GM12878 (cell line): ENCODE measurements at regions of chr6 and their contacts with region 1.

Region 1: DNA sequence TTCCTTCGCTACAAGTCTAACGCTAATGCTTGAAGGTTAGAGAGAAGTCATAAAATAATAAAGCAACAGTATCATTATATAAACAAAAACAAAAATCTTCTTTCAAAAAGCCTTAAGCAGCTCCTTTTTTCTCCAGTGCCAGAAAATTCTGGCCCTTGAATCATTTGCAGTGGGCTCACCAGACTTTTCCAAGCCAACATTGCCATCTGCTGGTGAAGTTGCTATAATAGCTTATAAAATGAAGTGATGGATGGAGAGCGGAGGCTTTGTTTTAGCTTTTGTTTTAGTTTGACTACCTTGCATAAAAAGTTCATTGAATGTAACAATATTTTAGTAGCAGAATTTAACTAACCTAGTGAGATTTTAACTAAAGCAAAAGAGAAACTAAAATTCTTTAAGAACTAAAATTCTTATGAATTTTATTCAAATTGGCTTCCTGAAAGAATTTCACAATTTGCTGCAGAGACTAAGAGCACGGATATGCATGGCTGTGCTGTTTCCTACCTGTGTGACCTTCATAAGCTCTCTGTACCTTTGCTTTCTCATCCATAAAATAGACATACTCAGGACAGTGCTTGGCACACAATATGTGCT is 44.8 kb upstream of the SLC2A12 start:
- DNase-seq: peak; percentile 3
- ATAC-seq: peak; percentile 66
- H3K4me3 ChIP-seq: no peak overlapping the region
- H3K27ac ChIP-seq: no peak overlapping the region
- H3K4me1 ChIP-seq: no peaks in the 10 kb centered on the region
- H3K27me3 ChIP-seq: no peaks in the 10 kb centered on the region
- CTCF ChIP-seq: peak; percentile 43 to 64 (median 54); a peak in 4 of 6 replicates
- EP300 ChIP-seq: no peak
- POLR2A ChIP-seq: no peak
- RAD21 ChIP-seq: peak; percentile 91

Region 2: GRCh38 chr6:133184798-133185372 is 912.3 kb before region 1 on chr6:
- CTCF ChIA-PET with region 1: no interaction called
- POLR2A ChIA-PET with region 1: no interaction called
- RAD21 ChIA-PET with region 1: no interaction called
- SMC1A ChIA-PET with region 1: no interaction called
- in situ Hi-C with region 1: loop called (anchors 25 kb)
- intact Hi-C with region 1: no loop called
- DNase-seq: no peak
- ATAC-seq: no peak
- H3K4me3 ChIP-seq: no peak overlapping the region
- H3K27ac ChIP-seq: no peak overlapping the region
- H3K4me1 ChIP-seq: no peaks in the 10 kb centered on the region
- H3K27me3 ChIP-seq: no peaks in the 10 kb centered on the region; a peak in 1 of 4 replicates
- CTCF ChIP-seq: peak; percentile 31 to 47 (median 43); a peak in 3 of 6 replicates
- EP300 ChIP-seq: no peak
- POLR2A ChIP-seq: no peak
- RAD21 ChIP-seq: peak; percentile 27; the same call in 1 of the 2 replicates

Region 3: GRCh38 chr6:133577851-133578250 is 519.4 kb before region 1 on chr6:
- CTCF ChIA-PET with region 1: no interaction called
- POLR2A ChIA-PET with region 1: no interaction called
- RAD21 ChIA-PET with region 1: no interaction called
- SMC1A ChIA-PET with region 1: no interaction called
- in situ Hi-C with region 1: loop called (anchors 25 kb)
- intact Hi-C with region 1: loop called (anchors 10 kb)
- DNase-seq: no peak
- ATAC-seq: no peak
- H3K4me3 ChIP-seq: no peak overlapping the region
- H3K27ac ChIP-seq: no peak overlapping the region
- H3K4me1 ChIP-seq: no peaks in the 10 kb centered on the region
- H3K27me3 ChIP-seq: no peaks in the 10 kb centered on the region; a peak in 1 of 4 replicates
- CTCF ChIP-seq: no peak
- EP300 ChIP-seq: no peak
- POLR2A ChIP-seq: no peak
- RAD21 ChIP-seq: no peak

Region 4: DNA sequence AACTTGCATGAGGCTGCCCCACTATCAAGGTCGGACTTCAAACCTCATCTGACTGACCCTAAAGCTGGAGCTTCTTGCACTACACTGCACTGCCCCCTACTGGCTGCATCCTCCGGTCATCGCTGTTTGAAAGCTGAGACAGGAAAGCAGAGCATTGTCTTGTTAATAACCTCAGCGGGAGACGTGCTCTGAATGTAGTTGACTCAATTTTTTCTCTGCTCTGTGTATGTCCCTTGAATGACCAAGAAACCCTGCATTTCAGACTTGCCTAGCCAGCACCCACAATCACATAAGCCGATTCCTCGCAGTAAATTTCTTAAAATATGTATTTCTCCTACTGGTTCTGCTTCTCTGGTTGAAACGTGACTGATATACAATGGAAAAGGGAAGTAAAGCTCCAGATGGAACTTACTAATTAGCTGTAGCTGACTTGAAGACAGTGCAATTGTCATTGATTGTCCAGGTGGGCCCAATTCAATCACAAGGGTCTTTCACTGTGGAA is 180.5 kb before region 1 on chr6:
- CTCF ChIA-PET with region 1: interaction called, 276 read pairs
- POLR2A ChIA-PET with region 1: no interaction called
- RAD21 ChIA-PET with region 1: interaction called, 133 read pairs
- SMC1A ChIA-PET with region 1: interaction called, 187 read pairs
- in situ Hi-C with region 1: loop called (anchors 5 kb)
- intact Hi-C with region 1: no loop called
- DNase-seq: peak; percentile 35
- ATAC-seq: peak; percentile 88
- H3K4me3 ChIP-seq: no peak overlapping the region
- H3K27ac ChIP-seq: no peak overlapping the region
- H3K4me1 ChIP-seq: no peaks in the 10 kb centered on the region
- H3K27me3 ChIP-seq: no peaks in the 10 kb centered on the region
- CTCF ChIP-seq: peak; percentile 85 to 89 (median 88)
- EP300 ChIP-seq: no peak
- POLR2A ChIP-seq: no peak
- RAD21 ChIP-seq: peak; percentile 87

Region 5: DNA sequence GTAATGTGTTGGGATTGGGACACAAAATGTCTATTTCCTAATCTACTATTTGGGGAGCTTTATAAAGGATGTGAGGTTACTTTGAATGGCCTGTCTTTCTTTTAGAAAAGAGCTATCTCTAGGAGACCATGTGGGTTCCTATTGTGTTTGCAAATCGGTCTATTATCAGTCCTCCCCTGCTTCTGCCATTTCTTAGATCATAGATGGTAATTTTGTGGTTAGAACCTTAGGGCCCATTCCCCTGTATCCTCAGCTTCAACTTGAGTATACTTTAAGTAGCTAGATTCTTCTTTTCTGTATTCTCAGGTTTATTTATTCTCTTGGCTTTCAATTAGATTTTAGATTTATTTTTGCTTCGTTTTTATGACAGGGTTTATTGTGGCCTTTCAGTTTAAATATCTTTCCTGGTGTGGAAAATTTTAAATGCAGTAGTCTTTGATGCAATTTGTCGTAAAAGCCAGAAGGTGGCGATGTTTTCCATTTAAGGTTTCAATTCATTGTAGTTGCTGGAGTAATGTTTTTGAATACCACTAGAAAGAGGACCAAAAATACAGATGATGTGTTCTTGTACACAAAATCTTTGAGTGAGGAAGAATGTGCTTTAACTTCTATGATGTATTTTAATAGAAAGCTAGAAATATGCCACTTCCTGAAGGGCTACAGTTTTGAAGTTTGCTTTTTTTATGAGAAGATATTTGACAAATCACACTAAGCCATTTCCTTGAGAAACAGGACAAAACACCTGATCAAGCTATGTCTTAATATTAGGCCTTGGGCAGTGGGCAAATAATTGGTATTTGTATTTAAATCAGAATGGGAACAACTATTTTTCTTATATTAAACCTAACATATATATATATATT is 123.9 kb before region 1 on chr6:
- CTCF ChIA-PET with region 1: interaction called, 48 read pairs
- POLR2A ChIA-PET with region 1: no interaction called
- RAD21 ChIA-PET with region 1: interaction called, 11 read pairs
- SMC1A ChIA-PET with region 1: interaction called, 23 read pairs
- in situ Hi-C with region 1: no loop called
- intact Hi-C with region 1: loop called (anchors 2 kb)
- DNase-seq: peak; percentile 28
- ATAC-seq: peak; percentile 75
- H3K4me3 ChIP-seq: no peak overlapping the region
- H3K27ac ChIP-seq: no peak overlapping the region
- H3K4me1 ChIP-seq: no peaks in the 10 kb centered on the region
- H3K27me3 ChIP-seq: no peaks in the 10 kb centered on the region
- CTCF ChIP-seq: peak; percentile 51 to 68 (median 65); a peak in 5 of 6 replicates
- EP300 ChIP-seq: no peak
- POLR2A ChIP-seq: no peak
- RAD21 ChIP-seq: peak; percentile 72

Region 6: DNA sequence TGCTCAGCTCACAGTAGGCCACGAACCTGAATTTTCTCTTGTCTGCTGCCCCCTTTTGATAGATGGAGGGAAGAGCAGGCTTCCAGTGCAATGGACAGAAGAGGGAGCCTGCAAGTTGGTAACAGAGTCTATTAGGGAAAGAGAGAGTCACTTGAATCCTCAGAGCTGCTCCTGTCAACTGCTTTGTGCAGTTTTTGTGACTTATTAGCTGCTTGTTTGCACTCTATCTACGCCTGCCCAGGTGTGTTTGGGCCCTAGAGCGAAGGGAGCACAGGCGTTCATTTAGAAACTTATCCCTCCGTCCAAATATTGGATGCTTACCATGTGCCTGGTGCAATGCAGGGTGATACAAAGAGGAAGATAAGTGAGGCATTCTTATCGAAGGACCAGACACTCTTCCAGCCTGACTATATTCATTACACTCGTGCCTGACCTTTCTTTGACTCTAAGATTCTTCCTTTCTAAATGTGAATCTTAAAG is 33.2 kb before region 1 on chr6:
- CTCF ChIA-PET with region 1: interaction called, 51 read pairs
- POLR2A ChIA-PET with region 1: no interaction called
- RAD21 ChIA-PET with region 1: interaction called, 16 read pairs
- SMC1A ChIA-PET with region 1: interaction called, 15 read pairs
- in situ Hi-C with region 1: no loop called
- intact Hi-C with region 1: no loop called
- DNase-seq: no peak
- ATAC-seq: peak; percentile 97
- H3K4me3 ChIP-seq: no peak overlapping the region
- H3K27ac ChIP-seq: no peak overlapping the region
- H3K4me1 ChIP-seq: no peaks in the 10 kb centered on the region
- H3K27me3 ChIP-seq: no peaks in the 10 kb centered on the region
- CTCF ChIP-seq: peak; percentile 86 to 94 (median 88)
- EP300 ChIP-seq: no peak
- POLR2A ChIP-seq: no peak
- RAD21 ChIP-seq: peak; percentile 80

Region 7: DNA sequence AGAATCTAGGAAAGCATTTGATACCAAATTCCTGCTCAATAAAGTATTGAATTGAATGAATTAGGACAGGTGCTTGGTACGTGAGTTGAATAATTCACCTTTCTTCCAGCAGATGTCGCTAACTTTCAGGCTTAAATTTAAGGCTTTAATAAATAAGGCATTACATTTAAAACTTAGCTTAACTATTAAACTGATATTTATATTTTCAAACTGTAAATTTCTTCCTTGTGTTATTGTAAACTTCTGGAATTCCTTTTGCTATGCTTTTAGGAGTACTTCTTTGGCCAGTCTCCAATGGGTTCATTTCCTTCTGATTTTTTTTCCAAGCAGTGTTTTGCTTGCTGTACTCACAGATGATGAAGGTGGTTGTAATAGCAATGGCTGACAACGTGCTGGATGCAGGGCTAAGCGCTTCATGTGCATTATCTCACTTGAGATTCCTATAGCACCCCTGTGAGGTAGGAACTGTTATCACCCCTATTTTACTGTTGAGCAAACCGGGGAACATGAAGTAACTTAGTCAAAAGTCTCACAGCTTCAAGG is 26.5 kb after region 1 on chr6:
- CTCF ChIA-PET with region 1: interaction called, 10 read pairs
- POLR2A ChIA-PET with region 1: no interaction called
- RAD21 ChIA-PET with region 1: interaction called, 3 read pairs
- SMC1A ChIA-PET with region 1: interaction called, 3 read pairs
- in situ Hi-C with region 1: no loop called
- intact Hi-C with region 1: no loop called
- DNase-seq: peak; percentile 12
- ATAC-seq: peak; percentile 70
- H3K4me3 ChIP-seq: no peak overlapping the region
- H3K27ac ChIP-seq: no peak overlapping the region
- H3K4me1 ChIP-seq: no peaks in the 10 kb centered on the region
- H3K27me3 ChIP-seq: no peaks in the 10 kb centered on the region
- CTCF ChIP-seq: peak; percentile 57 to 58 (median 58)
- EP300 ChIP-seq: no peak
- POLR2A ChIP-seq: no peak
- RAD21 ChIP-seq: peak; percentile 39

Region 8: GRCh38 chr6:135935941-135936601 is 1838.9 kb after region 1 on chr6:
- CTCF ChIA-PET with region 1: no interaction called
- POLR2A ChIA-PET with region 1: no interaction called
- RAD21 ChIA-PET with region 1: no interaction called
- SMC1A ChIA-PET with region 1: no interaction called
- in situ Hi-C with region 1: no loop called
- intact Hi-C with region 1: no loop called
- DNase-seq: no peak
- ATAC-seq: no peak
- H3K4me3 ChIP-seq: no peak overlapping the region
- H3K27ac ChIP-seq: no peak overlapping the region
- H3K4me1 ChIP-seq: no peaks in the 10 kb centered on the region
- H3K27me3 ChIP-seq: no peaks in the 10 kb centered on the region; a peak in 1 of 4 replicates
- CTCF ChIP-seq: no peak
- EP300 ChIP-seq: no peak
- POLR2A ChIP-seq: no peak
- RAD21 ChIP-seq: no peak